ENCODE measurements at regions of chr3 and their contacts with region 1.

Region 1: GRCh38 chr3:42961633-42962032 is 17.5 kb upstream of the GASK1A start:
- DNase-seq: peak; percentile 36
- H3K4me3 ChIP-seq: no peak overlapping the region
- H3K27ac ChIP-seq: no peak overlapping the region
- H3K4me1 ChIP-seq: no peaks in the 10 kb centered on the region
- H3K27me3 ChIP-seq: no peaks in the 10 kb centered on the region
- CTCF ChIP-seq: peak in 3 of 4 experiments; percentile 56 to 70 (median 57)
- POLR2A ChIP-seq: no peak

Region 2: DNA sequence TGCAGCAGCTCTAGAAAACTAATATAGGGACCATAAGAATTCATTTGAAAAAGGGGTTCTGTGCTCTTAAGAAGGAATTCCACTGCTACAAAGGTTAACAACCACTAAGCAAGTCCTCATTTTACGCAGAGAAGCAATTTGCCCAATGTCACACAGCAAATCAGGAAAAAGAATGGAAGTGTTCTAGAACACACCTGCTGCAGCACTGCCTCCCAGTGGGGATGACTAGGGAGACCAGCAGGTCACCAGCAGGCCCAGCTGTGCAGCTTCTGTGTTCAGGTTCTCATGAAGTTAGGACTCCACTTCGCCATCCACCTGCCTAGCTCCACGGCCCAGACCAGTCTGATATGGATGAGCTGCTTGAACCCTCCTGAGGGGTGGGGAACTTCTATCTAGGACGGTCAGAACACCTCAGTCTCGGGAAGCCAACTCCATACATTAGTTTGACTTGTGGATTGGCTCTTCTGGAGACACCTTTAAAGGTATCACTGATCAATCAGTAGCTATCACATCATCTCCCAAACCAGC is 125.7 kb after region 1 on chr3:
- intact Hi-C with region 1: loop called (anchors 5 kb)
- DNase-seq: no peak
- H3K4me3 ChIP-seq: no peak overlapping the region
- H3K27ac ChIP-seq: no peak overlapping the region
- H3K4me1 ChIP-seq: no peaks in the 10 kb centered on the region
- H3K27me3 ChIP-seq: no peaks in the 10 kb centered on the region
- CTCF ChIP-seq: no peak
- POLR2A ChIP-seq: no peak

Region 3: GRCh38 chr3:43105596-43106292 is 144.1 kb after region 1 on chr3 and contains the start of gene POMGNT2:
- intact Hi-C with region 1: loop called (anchors 5 kb)
- DNase-seq: peak; percentile 89
- H3K4me3 ChIP-seq: peak within 1 kb of the TSS; percentile 62 to 74
- H3K27ac ChIP-seq: peak within 1 kb of the TSS; percentile 57 to 58
- H3K4me1 ChIP-seq: no peaks in the 10 kb centered on the region
- H3K27me3 ChIP-seq: no peaks in the 10 kb centered on the region
- CTCF ChIP-seq: peak in 2 of 4 experiments; percentile 24 to 27
- POLR2A ChIP-seq: peak; percentile 44
- total RNA-seq, gene POMGNT2: 20.7 to 46.5 TPM

Region 4: DNA sequence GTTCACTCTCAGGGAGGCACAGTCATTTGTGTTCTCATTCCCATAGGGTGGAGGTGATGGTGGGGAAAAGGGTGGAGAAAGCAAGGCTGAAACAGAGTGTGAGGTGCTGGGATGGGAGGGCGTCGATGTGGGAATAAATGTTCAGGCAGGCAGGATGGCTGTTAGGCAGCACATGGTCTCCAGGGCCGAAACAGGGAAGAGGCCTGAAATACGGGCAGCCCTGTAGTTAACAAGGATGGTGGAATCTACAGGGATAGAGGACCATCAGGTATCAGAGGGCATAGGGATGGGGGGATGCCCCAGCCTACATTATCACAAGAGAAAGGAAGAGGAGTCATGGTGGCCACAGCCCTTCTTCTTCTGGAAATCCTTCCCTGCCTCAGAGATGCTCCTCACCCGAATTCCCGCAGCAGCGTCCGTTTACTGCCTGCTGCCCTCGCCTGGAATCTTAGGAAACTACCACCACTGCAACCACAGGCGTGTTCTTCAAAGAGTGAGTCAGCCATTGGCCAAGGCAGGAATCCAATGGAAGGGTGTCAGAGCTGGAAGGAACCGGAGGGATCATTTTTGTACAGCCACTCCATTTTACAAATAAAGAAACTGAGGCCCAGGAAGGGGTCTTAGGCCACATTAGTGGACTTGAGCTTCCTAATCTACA is 194.0 kb after region 1 on chr3:
- intact Hi-C with region 1: loop called (anchors 1 kb)
- DNase-seq: peak; percentile 22
- H3K4me3 ChIP-seq: no peak overlapping the region
- H3K27ac ChIP-seq: no peak overlapping the region
- H3K4me1 ChIP-seq: peaks cover 4% of the 10 kb centered on the region
- H3K27me3 ChIP-seq: no peaks in the 10 kb centered on the region
- CTCF ChIP-seq: peak in 3 of 4 experiments; percentile 18 to 46 (median 45)
- POLR2A ChIP-seq: no peak

Region 5: DNA sequence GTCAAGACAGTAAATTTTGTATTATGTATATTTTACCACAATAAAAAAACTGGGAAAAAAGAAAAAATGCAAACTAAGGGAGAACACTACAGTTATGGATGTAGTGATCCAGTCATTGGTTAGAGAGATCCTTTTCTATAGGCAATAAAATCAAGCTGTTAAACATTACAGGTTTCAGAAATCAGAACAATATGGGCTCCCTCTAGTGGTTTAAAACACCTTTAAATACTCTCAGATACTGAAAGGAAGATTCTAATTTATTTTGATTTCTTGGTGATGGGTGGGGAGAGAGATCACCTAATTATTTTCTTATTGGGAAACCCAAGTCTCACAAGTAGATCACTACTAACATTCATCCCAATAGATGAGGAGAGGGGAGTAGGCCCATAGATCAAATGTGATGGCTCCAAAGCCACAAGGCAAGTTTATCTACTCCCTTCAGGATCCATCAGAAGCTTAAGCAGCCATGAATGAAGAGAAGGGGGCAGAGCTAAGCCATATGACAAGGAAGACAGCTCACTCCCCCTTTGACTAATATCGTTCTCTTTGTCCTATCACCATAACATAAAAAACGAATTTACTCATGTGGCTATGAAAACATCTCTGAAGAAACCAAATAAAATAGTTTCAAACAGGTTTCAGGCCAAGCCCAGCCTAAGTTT is 541.6 kb after region 1 on chr3:
- intact Hi-C with region 1: loop called (anchors 5 kb)
- DNase-seq: no peak
- H3K4me3 ChIP-seq: no peak overlapping the region
- H3K27ac ChIP-seq: peak overlapping the region in 1 of 2 donors; percentile 25
- H3K4me1 ChIP-seq: no peaks in the 10 kb centered on the region
- H3K27me3 ChIP-seq: no peaks in the 10 kb centered on the region
- CTCF ChIP-seq: peak; percentile 24 to 68 (median 58)
- POLR2A ChIP-seq: no peak